ENCODE measurements at regions of chr22 and their contacts with region 1.

Region 1: DNA sequence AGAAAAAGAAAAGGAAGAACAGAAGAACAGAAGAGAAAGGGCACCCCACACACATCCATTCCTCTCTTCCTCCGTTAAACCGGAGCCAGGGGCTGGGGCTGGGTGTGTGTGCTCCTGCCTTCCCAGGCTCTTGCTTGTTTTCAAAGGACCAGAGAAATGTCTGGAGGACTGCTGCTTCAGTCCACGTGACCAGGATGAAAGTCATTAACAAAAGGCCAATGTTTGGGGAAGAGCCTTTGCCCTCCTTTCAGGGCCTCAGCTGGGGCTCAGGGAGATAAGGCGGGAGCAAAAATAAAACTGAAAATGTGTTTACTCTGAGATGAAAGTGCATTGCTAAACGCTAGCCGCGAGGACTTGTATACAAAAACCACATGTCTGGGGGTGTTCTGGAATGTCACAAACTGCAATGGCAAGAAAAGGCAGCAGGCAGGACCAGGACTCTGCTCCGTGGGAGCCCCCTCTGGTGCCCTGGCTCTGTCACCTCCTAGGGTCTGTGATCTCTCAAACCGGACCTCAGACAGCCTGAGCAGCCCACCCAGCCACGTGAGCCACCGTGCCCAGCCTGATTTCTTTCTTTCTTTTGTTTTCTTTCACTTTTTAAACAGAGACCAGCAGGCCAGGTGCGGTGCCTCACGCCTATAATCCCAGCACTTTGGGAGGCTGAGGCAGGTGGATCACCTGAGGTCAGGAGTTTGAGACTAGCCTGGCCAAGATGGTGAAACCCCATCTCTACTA is 31.6 kb upstream of the MYH9 start:
- DNase-seq: peak; percentile 96
- ATAC-seq: peak; percentile 86
- H3K4me3 ChIP-seq: no peak overlapping the region
- H3K27ac ChIP-seq: peak overlapping the region; percentile 90
- H3K4me1 ChIP-seq: peaks cover 28% of the 10 kb centered on the region
- H3K27me3 ChIP-seq: no peaks in the 10 kb centered on the region
- CTCF ChIP-seq: 0 out of 2 replicates have a peak, but pooled peaks have one; percentile 2
- POLR2A ChIP-seq: no peak
- RAD21 ChIP-seq: no peak; the same call in 1 of the 2 replicates

Region 2: DNA sequence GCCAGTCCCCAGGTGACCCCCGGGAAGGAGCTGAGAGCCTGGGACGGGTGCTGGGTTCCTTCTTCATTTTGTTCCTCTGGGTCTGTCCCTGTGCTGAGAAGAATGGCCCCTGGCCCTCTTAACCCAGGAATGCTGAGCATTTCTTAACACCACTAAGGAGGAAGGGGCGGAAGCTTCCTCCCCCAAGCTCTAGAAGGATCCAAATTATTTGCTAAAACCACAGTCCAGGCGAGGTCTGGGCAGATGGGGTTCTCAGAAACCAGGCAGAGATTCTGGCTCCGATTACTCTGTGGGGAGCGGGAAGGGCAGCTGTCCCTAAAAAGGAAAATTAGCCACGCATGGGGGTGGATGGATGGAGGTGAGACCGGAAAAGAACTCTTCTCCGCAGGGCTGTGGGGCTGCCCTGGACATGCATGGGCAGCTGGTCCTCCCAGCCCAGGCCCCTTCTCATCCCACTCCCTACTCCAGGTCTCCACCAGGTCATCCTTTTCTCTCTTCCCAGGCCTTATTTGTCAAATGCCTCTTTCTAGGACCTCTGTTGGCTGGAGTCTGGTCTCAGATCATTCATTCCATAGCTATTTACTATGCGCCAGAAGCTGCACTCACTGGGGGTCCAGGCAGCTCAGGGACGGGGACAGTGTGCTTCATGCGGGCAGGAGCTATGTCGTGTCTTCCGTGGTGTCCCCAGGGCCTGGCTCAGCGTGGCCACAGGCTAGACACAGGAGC is 13.4 kb after region 1 on chr22:
- CTCF ChIA-PET with region 1: no interaction called
- POLR2A ChIA-PET with region 1: interaction called, 14 read pairs
- dilution Hi-C with region 1: no loop called
- in situ Hi-C with region 1: no loop called
- intact Hi-C with region 1: no loop called
- DNase-seq: no peak
- ATAC-seq: peak; percentile 28
- H3K4me3 ChIP-seq: no peak overlapping the region
- H3K27ac ChIP-seq: no peak overlapping the region
- H3K4me1 ChIP-seq: peaks cover 27% of the 10 kb centered on the region
- H3K27me3 ChIP-seq: no peaks in the 10 kb centered on the region
- CTCF ChIP-seq: no peak
- POLR2A ChIP-seq: no peak
- RAD21 ChIP-seq: no peak